Ovary (tissue), 10 donors: ENCODE measurements at regions of chr2 and their contacts with region 1.

Region 1: DNA sequence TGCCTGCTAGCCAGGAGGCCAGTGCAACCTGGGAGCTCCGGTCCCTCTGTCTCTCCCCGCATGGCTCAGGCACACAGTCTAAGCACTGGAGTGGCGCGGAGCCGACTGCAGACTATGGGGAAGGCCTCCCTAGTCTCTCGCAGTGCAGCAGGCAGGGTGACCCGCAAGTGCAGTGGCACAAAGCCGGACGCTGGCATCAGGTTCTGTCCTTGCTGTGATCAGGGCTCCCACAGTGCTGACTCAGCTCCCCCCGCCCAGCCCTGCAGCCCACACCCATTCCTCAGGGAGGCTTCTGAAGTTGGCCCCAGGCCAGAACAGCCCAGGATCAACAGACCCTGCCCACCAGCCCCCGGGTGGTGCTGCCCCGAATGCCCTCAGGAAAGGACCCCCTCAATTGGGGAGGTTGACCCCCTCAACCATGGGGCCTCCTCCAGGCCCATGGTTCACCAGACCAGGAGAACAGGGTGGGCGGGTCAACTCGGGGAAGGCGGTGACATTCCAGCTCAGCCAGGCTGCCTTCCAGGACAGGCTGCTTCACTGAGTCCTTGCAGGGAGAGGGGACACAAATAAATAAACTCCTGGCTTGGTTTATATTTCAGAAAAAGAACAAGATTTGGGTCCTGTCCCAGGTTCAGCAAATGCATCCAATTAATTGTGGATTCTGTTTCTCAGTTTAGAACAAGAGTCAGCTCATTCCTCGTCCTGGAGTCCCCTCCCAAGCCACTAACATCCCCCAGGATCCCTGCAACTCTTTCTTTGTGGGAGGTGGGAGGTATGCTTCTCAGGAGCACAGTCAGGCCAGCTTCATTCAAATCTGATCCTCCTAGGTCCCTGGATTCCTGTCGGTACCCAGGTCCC is 12.2 kb downstream of the BIN1 start:
- DNase-seq: peak in 4 of 5 donors; percentile 54 to 65 (median 56)
- H3K4me3 ChIP-seq: no peak overlapping the region
- H3K27ac ChIP-seq: peak overlapping the region; percentile 21 to 45
- H3K4me1 ChIP-seq: peaks cover 14% of the 10 kb centered on the region
- H3K27me3 ChIP-seq: no peaks in the 10 kb centered on the region
- CTCF ChIP-seq: no peak
- EP300 ChIP-seq: no peak
- POLR2A ChIP-seq: no peak

Region 2: GRCh38 chr2:125386074-125386473 is 1708.7 kb before region 1 on chr2:
- intact Hi-C with region 1: no loop called
- DNase-seq: no peak
- H3K4me3 ChIP-seq: no peak overlapping the region
- H3K27ac ChIP-seq: no peak overlapping the region
- H3K4me1 ChIP-seq: no peaks in the 10 kb centered on the region
- H3K27me3 ChIP-seq: no peaks in the 10 kb centered on the region
- CTCF ChIP-seq: no peak
- EP300 ChIP-seq: no peak
- POLR2A ChIP-seq: no peak

Region 3: DNA sequence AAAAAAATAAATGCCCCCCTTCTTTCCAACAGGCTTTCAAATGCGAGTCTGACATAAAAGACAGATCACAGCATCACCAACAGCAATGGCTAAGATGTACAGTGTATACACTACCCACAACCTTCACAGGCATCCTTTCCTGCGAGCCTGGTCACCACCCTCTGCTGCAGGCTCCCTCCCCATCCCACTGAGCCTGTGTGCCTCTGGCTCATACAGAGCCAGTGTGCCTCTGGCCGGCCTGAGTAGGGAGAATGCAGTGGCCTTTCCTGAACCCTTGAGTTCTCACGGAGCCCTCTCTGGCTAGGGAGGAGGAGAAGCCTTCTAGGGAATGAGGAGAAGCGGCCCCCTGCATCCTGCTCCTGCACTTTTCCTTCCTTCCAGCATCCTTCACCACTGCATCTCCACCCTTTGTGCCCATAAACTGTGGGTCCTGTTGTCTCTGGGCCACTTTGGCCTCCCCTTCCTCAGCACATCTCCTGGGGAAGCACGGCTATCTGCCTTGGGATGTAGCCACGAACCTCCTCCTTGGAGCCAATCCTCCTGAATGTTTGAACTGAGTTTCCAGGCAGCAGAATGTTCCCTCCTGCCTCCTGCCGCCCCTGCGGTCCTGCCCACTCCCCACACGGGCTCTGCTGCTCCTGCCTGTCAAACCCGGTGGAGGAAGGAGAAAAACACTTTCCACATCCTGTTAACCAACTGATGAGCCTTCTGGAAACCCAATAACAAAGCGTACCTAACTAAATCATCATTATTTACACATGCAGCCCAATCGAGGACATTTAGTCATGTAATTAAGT is 416.3 kb before region 1 on chr2:
- intact Hi-C with region 1: no loop called
- DNase-seq: no peak
- H3K4me3 ChIP-seq: no peak overlapping the region
- H3K27ac ChIP-seq: no peak overlapping the region
- H3K4me1 ChIP-seq: no peaks in the 10 kb centered on the region
- H3K27me3 ChIP-seq: no peaks in the 10 kb centered on the region
- CTCF ChIP-seq: no peak
- EP300 ChIP-seq: no peak
- POLR2A ChIP-seq: no peak

Region 4: DNA sequence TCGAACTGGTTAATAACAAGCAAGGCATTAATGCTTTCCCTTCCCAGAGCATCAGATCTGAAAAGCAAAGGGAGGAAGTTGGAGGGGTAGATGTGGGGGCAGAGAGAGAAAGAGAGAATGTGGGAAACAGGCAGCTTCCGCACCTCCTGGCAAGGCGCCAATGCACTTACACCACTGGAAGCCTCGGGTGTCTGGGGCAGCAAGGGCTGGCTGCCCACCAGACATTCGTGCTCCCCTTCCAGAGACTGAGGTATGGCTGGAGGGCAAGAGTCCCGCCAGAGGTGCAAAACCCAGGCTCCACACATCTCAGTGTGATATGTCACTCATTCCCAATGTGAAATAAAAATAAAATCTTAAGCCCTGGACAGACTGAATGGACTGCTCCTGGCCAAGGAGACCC is 149.6 kb before region 1 on chr2:
- intact Hi-C with region 1: no loop called
- DNase-seq: no peak
- H3K4me3 ChIP-seq: no peak overlapping the region
- H3K27ac ChIP-seq: no peak overlapping the region
- H3K4me1 ChIP-seq: no peaks in the 10 kb centered on the region
- H3K27me3 ChIP-seq: no peaks in the 10 kb centered on the region
- CTCF ChIP-seq: no peak
- EP300 ChIP-seq: no peak
- POLR2A ChIP-seq: no peak

Region 5: DNA sequence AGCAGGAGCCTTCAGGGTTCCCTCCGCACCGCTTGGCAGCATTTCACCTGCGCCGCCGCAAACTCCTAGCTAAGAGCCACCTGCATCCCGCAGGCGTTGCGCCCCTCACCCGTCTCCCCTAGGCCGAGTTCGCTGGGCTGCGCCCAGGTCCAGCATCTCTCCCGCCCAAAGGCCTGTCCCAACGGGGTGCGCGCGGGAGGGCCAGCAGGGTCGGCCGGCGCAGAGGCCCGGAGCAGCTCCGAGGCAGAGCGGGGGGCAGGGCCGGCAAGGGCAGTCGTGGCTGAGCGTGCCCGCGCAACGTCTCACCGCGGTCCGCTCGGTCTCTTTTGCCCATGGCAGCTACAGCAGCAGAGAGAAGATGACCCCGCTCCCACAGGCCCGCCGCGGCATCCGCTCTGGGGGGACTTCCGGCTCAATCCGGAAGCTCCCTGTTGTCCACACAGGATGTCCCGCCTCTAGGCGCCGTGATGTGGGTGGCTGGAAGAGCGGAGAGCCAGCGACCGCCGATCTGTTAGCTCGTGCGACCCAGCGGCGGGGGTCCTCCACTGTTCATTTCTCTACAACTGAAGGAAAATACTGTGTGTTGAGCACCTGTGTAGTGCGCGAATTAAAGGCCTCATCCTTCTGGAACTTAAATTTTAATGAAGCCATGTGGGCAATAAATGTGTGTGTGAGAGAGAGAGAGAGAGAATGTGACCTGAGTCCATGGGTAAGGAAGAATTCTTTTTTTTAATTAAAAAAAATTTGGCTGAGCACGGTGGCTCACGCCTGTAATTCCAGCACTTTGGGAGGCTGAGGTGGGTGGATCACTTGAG is 199.2 kb after region 1 on chr2 and contains the start of gene ERCC3:
- intact Hi-C with region 1: loop called in 1 of 4 experiments (anchors 10 kb)
- DNase-seq: peak; percentile 78 to 90 (median 83)
- H3K4me3 ChIP-seq: peak within 1 kb of the TSS; percentile 71
- H3K27ac ChIP-seq: peak within 1 kb of the TSS; percentile 46 to 60
- H3K4me1 ChIP-seq: peaks cover 5% of the 10 kb centered on the region
- H3K27me3 ChIP-seq: no peaks in the 10 kb centered on the region
- CTCF ChIP-seq: no peak
- EP300 ChIP-seq: no peak
- POLR2A ChIP-seq: no peak
- total RNA-seq, gene ERCC3: 26.8 to 38.2 (median 35.1) TPM